GM10248 (cell line): ENCODE measurements at regions of chr10 and their contacts with region 1.

Region 1: GRCh38 chr10:119693262-119693957 is 32.4 kb upstream of the INPP5F start:
- DNase-seq: peak; percentile 69
- CTCF ChIP-seq: no peak

Region 2: DNA sequence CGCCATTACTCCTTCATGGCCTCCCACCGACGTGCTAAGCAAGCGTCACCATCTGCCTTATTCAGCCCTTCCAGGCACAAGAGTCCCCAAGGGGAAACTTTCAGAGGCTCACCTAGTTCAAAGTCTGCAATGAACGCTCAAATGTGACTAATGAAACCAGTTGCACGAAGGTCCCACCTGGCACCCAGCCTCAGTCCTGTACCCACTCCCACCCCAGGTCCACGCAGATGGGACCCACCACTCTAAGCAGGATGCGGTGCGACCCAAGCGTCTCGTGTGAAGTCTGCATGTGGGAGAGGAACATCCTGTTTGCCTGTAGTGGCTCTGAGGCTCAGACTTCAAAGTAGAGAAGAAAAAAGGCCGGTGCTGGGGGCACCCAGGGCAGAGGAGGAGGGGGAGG is 191.2 kb before region 1 on chr10:
- CTCF ChIA-PET with region 1: no interaction called
- POLR2A ChIA-PET with region 1: no interaction called
- DNase-seq: peak; percentile 45
- CTCF ChIP-seq: no peak

Region 3: GRCh38 chr10:119705434-119705831 is 12.0 kb after region 1 on chr10:
- CTCF ChIA-PET with region 1: interaction called, 27 read pairs
- POLR2A ChIA-PET with region 1: interaction called, 8 read pairs
- DNase-seq: peak; percentile 48
- CTCF ChIP-seq: no peak